Activated B cell treated with CpG ODN at 0.5 μM for 24 hours (primary cell): ENCODE measurements at regions of chr17 and their contacts with region 1.

Region 1: DNA sequence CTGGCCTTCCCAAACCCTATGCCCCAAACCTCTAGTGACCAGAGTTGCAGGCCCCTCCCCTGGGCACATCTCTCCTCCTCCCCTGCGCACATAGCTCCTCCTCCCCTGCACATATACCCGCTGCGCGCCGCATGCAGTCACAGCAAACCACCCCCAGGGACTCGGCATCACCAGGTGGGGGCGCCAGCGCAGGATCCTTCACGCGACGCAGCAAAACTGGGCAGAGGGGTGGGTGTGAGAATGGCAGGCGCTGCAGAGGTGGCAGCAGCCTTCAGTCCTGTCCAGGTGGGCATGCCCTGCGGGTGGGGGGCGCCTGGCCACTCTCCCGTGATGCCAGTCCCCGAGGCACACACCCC is 5.6 kb downstream of the CORO6 start:
- DNase-seq: peak; percentile 75
- ATAC-seq: peak; percentile 79
- H3K4me3 Mint-ChIP-seq: peak overlapping the region; percentile 83
- H3K27ac Mint-ChIP-seq: peak overlapping the region; percentile 72
- H3K4me1 Mint-ChIP-seq: peaks cover 46% of the 10 kb centered on the region
- H3K27me3 Mint-ChIP-seq: peaks cover 3% of the 10 kb centered on the region
- CTCF ChIP-seq: no peak

Region 2: GRCh38 chr17:29363716-29364115 is 253.4 kb before region 1 on chr17:
- CTCF ChIA-PET with region 1: no interaction called
- POLR2A ChIA-PET with region 1: no interaction called
- intact Hi-C with region 1: no loop called
- DNase-seq: no peak
- ATAC-seq: no peak
- H3K4me3 Mint-ChIP-seq: no peak overlapping the region
- H3K27ac Mint-ChIP-seq: no peak overlapping the region
- H3K4me1 Mint-ChIP-seq: no peaks in the 10 kb centered on the region
- H3K27me3 Mint-ChIP-seq: no peaks in the 10 kb centered on the region
- CTCF ChIP-seq: no peak

Region 3: GRCh38 chr17:29579866-29580771 is 37.0 kb before region 1 on chr17:
- CTCF ChIA-PET with region 1: interaction called, 57 read pairs
- POLR2A ChIA-PET with region 1: interaction called, 5 read pairs
- intact Hi-C with region 1: loop called (anchors 1 kb)
- DNase-seq: peak; percentile 82
- ATAC-seq: peak; percentile 98
- H3K4me3 Mint-ChIP-seq: no peak overlapping the region
- H3K27ac Mint-ChIP-seq: peak overlapping the region; percentile 71
- H3K4me1 Mint-ChIP-seq: peaks cover 27% of the 10 kb centered on the region
- H3K27me3 Mint-ChIP-seq: no peaks in the 10 kb centered on the region
- CTCF ChIP-seq: no peak

Region 4: GRCh38 chr17:29589524-29590410 is 27.3 kb before region 1 on chr17 and contains the start of gene GIT1:
- CTCF ChIA-PET with region 1: interaction called, 20 read pairs
- POLR2A ChIA-PET with region 1: interaction called, 16 read pairs
- intact Hi-C with region 1: loop called (anchors 1 kb)
- DNase-seq: peak; percentile 88
- ATAC-seq: peak; percentile 83
- H3K4me3 Mint-ChIP-seq: peak within 1 kb of the TSS; percentile 87
- H3K27ac Mint-ChIP-seq: peak within 1 kb of the TSS; percentile 83
- H3K4me1 Mint-ChIP-seq: peaks cover 73% of the 10 kb centered on the region
- H3K27me3 Mint-ChIP-seq: no peaks in the 10 kb centered on the region
- CTCF ChIP-seq: no peak
- total RNA-seq, gene GIT1: 41.7 and 45.3 TPM in 2 replicates

Region 5: GRCh38 chr17:29597361-29598172 is 19.5 kb before region 1 on chr17:
- CTCF ChIA-PET with region 1: interaction called, 20 read pairs
- POLR2A ChIA-PET with region 1: interaction called, 16 read pairs
- intact Hi-C with region 1: no loop called
- DNase-seq: no peak
- ATAC-seq: no peak
- H3K4me3 Mint-ChIP-seq: no peak overlapping the region
- H3K27ac Mint-ChIP-seq: no peak overlapping the region
- H3K4me1 Mint-ChIP-seq: peaks cover 10% of the 10 kb centered on the region
- H3K27me3 Mint-ChIP-seq: no peaks in the 10 kb centered on the region
- CTCF ChIP-seq: no peak